Endothelial cell of umbilical vein (primary cell): ENCODE measurements at regions of chr6 and their contacts with region 1.

Region 1: DNA sequence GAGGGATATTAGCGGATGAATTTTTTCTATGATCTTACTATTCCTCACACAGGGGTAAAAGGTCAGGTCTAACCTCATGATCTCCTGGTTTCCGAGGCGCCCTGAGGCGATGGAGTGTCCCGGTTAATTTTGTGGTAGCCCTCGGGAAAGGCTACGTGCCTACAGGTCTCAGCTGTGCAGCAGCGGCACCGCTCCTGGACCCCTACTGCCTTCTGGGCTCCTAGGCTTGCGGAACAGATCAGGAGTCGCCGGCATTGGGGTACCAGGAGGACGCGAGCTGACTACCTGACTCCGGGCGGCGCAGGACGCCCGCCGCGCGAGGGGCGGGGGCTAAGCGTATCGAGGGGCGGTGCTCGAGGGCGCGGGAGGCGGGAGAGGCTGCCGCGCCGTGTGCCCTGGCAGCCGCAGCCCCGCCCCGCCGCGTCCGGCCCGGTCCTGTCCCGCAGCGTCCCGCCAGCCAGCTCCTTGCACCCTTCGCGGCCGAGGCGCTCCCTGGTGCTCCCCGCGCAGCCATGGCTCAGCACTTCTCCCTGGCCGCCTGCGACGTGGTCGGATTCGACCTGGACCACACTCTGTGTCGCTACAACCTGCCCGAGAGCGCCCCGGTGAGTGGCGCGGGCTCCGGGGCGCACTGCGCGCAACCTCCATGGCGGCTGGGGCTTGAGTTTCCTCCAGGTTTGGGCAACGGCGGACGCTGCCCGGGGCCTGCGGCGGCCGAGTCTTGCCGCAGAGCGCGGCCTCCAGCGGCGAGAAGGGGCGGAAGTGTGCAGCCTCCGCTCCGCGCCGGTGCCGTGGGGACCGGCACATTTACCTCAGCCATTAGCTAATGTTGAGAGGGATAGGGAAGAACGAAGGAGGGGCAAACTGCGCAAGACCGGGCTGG is at the start of gene NT5DC1:
- DNase-seq: peak; percentile 80
- H3K4me3 ChIP-seq: peak within 1 kb of the TSS; percentile 49 to 85 (median 62)
- H3K27ac ChIP-seq: peak within 1 kb of the TSS; percentile 36
- H3K4me1 ChIP-seq: peaks cover 11% of the 10 kb centered on the region
- H3K27me3 ChIP-seq: peaks cover 0 to 3% of the 10 kb centered on the region in 2 experiments
- CTCF ChIP-seq: peak in 1 of 2 donors; percentile 32
- POLR2A ChIP-seq: peak; percentile 63
- total RNA-seq, gene NT5DC1: 23.8 and 24.3 TPM in 2 replicates

Region 2: GRCh38 chr6:115677198-115677597 is 423.5 kb before region 1 on chr6:
- CTCF ChIA-PET with region 1: no interaction called
- POLR2A ChIA-PET with region 1: no interaction called
- dilution Hi-C with region 1: no loop called
- intact Hi-C with region 1: no loop called
- DNase-seq: no peak
- H3K4me3 ChIP-seq: no peak overlapping the region
- H3K27ac ChIP-seq: no peak overlapping the region
- H3K4me1 ChIP-seq: no peaks in the 10 kb centered on the region
- H3K27me3 ChIP-seq: no peaks in the 10 kb centered on the region
- CTCF ChIP-seq: no peak
- POLR2A ChIP-seq: no peak

Region 3: DNA sequence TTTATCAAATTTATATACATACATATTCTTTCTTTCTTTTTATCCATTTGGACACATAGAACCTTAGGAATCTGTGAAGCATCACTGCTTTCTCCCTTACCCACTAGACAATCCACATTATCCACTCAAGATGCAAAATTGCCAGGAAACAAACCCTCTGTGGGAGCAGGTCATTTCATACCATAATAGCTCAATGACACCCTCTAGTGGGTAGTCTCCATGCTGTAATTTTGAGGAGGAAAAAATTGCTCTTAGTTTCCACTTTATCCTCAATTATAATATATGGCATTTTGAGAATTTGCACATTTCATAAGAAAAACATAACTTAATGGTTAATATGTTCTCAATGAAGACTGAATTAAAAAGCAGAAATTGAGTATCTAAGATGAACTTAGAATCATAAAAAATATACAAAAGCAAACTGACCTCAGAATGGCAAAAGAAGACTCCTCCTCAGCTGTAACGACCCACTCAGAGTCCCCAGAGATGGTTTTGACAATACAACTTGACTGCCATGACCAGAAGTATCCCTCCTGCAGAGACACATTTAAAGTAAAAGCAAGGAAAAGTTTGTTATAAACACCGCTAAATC is 204.0 kb before region 1 on chr6:
- CTCF ChIA-PET with region 1: interaction called, 5 read pairs
- POLR2A ChIA-PET with region 1: no interaction called
- dilution Hi-C with region 1: no loop called
- intact Hi-C with region 1: loop called (anchors 5 kb)
- DNase-seq: peak; percentile 37
- H3K4me3 ChIP-seq: no peak overlapping the region
- H3K27ac ChIP-seq: no peak overlapping the region
- H3K4me1 ChIP-seq: no peaks in the 10 kb centered on the region
- H3K27me3 ChIP-seq: no peaks in the 10 kb centered on the region
- CTCF ChIP-seq: peak; percentile 47 to 55
- POLR2A ChIP-seq: no peak

Region 4: GRCh38 chr6:116016846-116017545 is 83.7 kb before region 1 on chr6:
- CTCF ChIA-PET with region 1: interaction called, 216 read pairs
- POLR2A ChIA-PET with region 1: no interaction called
- dilution Hi-C with region 1: no loop called
- intact Hi-C with region 1: no loop called
- DNase-seq: peak; percentile 52
- H3K4me3 ChIP-seq: no peak overlapping the region
- H3K27ac ChIP-seq: no peak overlapping the region
- H3K4me1 ChIP-seq: peaks cover 4% of the 10 kb centered on the region
- H3K27me3 ChIP-seq: no peaks in the 10 kb centered on the region
- CTCF ChIP-seq: no peak
- POLR2A ChIP-seq: no peak

Region 5: DNA sequence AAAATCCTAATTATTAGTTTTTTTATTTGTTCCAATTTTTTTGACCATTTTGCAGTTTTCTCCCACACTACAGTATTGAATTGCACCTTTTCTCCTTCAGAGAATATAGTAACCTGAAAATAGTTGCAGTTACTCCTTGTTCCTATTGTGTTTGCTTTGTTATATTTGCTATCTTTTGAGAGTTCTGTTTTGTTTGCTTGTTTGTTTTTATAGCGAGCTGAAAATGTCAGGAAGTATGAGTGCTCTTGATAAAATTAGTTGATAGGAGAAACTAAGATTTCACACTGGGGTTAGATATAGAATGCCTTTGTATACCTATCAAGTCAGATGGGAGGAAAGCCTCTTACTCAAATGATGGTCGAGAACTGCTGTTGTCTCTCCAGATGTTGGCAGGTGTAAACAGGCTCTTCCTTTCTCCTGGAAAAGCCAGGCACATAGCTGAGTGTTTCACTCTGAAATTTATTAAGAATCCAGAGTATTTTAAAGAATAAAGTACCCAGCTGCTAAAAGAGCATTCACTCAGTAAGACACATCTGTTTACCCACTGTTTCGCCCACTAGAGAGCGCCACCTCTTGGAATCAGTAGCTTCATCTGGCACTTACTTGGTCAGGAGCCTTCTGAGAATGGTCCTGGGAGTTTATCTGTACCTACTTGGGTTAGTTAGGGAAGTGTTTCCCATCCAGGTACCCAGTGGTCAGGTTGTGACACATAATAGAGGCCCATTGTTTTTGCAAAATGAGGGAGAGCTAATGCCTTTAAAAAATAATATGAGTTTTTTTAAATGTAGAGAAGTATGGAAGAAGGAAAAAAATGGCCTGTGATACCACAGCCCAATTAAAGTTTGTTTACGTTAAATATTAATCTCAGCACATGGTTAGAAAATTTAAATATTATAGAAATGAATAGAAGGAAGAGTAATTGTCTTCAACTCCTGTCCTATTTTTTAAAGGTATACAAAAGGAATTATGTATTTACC is 11.2 kb after region 1 on chr6:
- CTCF ChIA-PET with region 1: interaction called, 43 read pairs
- POLR2A ChIA-PET with region 1: no interaction called
- dilution Hi-C with region 1: no loop called
- intact Hi-C with region 1: no loop called
- DNase-seq: peak; percentile 46
- H3K4me3 ChIP-seq: no peak overlapping the region
- H3K27ac ChIP-seq: no peak overlapping the region
- H3K4me1 ChIP-seq: no peaks in the 10 kb centered on the region
- H3K27me3 ChIP-seq: no peaks in the 10 kb centered on the region
- CTCF ChIP-seq: peak; percentile 56 to 69
- POLR2A ChIP-seq: no peak

Region 6: GRCh38 chr6:116144605-116145004 is 43.9 kb after region 1 on chr6:
- CTCF ChIA-PET with region 1: no interaction called
- POLR2A ChIA-PET with region 1: no interaction called
- dilution Hi-C with region 1: no loop called
- intact Hi-C with region 1: no loop called
- DNase-seq: no peak
- H3K4me3 ChIP-seq: no peak overlapping the region
- H3K27ac ChIP-seq: no peak overlapping the region
- H3K4me1 ChIP-seq: no peaks in the 10 kb centered on the region
- H3K27me3 ChIP-seq: no peaks in the 10 kb centered on the region
- CTCF ChIP-seq: no peak
- POLR2A ChIP-seq: no peak

Region 7: DNA sequence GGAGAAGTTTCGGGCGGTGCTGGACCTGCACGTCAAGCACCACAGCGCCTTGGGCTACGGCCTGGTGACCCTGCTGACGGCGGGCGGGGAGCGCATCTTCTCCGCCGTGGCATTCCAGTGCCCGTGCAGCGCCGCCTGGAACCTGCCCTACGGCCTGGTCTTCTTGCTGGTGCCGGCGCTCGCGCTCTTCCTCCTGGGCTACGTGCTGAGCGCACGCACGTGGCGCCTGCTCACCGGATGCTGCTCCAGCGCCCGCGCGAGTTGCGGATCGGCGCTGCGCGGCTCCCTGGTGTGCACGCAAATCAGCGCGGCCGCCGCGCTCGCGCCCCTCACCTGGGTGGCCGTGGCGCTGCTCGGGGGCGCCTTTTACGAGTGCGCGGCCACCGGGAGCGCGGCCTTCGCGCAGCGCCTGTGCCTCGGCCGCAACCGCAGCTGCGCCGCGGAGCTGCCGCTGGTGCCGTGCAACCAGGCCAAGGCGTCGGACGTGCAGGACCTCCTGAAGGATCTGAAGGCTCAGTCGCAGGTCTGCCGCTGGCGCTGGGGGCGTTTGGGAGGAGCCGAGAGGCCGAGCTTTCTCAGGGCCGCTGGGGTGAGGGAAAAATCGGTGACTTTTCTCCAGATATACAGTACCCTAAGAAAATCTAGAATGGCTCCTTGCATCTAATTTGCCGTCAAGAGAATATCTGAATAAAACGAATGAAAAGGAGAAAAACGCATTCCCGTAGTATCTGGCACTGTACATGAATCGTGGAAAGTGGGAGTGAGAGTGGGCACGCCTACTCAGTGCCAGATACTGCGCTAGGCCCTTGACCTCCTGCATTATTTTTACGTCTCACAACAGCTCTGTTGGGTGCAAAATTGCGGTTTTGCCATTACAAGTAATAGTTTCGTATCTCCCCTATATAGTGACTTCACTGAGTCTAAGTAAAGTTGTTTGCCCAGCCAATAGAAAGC is 361.5 kb after region 1 on chr6:
- CTCF ChIA-PET with region 1: no interaction called
- POLR2A ChIA-PET with region 1: no interaction called
- dilution Hi-C with region 1: no loop called
- intact Hi-C with region 1: no loop called
- DNase-seq: peak; percentile 49
- H3K4me3 ChIP-seq: peak overlapping the region in 2 of 3 experiments; percentile 10 to 31
- H3K27ac ChIP-seq: no peak overlapping the region
- H3K4me1 ChIP-seq: peaks cover 8% of the 10 kb centered on the region
- H3K27me3 ChIP-seq: peaks cover 23 to 26% of the 10 kb centered on the region in 2 experiments
- CTCF ChIP-seq: no peak
- POLR2A ChIP-seq: no peak